B cell (primary cell): ENCODE measurements at regions of chr5 and their contacts with region 1.

Region 1: DNA sequence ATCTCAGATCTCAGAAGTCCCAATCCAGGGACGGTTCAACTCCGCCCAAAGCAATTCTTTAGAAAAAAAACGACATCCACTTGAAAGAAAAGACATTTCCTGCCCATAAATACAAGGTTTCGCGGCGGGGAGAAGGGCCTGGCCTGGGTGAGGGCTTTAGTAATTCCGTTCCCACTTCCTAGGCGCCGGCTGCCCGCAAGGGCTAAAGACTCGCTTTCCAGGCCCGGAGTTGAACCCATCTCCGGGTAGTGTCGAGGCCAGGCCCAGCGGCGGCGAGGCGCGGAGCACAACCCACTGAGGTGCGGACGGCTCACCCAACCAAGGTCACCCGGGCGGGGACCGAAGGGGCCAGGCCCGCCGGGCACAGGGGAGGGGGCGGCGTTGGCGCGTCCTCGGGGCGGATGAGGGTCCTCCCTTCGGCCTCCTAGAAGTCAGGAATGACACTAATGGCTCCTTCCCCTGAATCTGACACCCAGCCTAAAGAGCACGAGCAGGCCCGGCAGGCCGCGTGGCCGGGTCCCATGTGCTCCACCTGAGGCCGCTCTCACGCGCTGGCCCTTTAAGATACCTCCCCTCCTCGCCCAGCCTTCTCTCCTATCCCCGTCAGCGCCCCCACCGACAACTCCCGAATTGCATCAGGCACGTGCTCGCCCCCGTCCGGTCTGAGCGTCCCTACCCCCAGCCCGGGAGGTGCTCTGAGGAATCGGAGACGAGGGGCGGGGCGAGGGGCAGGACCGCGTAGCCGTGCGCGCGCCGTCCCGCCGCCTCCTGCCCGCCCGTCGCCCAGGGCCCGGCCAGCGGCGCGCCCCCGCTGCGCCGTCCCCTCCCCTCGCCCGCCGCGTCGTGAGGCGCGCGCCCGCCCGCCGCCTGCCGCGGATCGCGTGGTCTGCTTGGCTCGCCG is 467 bp upstream of the LARP1 start:
- DNase-seq: peak; percentile 99
- ATAC-seq: peak; percentile 89
- H3K4me3 ChIP-seq: peak overlapping the region in 4 of 5 experiments; percentile 69 to 96 (median 85)
- H3K4me3 Mint-ChIP-seq: peak overlapping the region; percentile 90
- H3K27ac ChIP-seq: peak overlapping the region; percentile 80 to 97
- H3K27ac Mint-ChIP-seq: peak overlapping the region; percentile 91
- H3K4me1 ChIP-seq: peaks cover 28 to 29% of the 10 kb centered on the region in 2 donors
- H3K4me1 Mint-ChIP-seq: peaks cover 43% of the 10 kb centered on the region
- H3K27me3 ChIP-seq: no peaks in the 10 kb centered on the region
- H3K27me3 Mint-ChIP-seq: no peaks in the 10 kb centered on the region
- CTCF ChIP-seq: peak; percentile 45

Region 2: DNA sequence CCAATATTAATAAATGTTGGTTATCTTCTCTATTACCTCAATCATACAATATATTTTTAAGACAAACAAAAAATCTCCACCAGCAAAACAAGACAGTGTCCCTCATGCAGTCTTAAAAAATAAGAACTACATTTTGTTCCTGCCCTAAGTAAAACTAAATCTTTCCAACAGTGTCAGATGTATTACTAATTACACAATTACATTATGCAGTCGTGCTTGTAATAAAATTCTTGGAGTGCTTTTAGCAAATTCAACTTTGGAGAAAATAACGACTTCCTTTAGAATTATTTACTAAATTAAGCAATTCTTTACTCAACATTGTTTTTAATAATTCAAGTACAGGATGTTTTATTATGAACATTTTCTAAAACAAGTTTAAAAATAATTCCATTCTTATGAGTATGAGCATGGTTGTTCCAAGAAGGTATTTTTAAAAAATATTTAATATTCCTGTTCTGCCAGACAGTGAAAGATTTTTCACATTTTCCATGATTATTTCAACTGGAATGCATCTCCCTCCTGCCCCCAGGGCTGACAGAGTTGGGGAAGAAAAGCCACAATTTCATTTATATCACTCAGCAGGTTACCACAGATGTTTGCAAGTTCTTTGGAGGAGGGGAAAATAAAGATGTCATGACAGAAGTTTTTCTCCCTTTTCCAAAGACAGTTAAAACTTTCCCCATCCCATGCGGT is 853.9 kb before region 1 on chr5:
- CTCF ChIA-PET with region 1: no interaction called
- POLR2A ChIA-PET with region 1: no interaction called
- intact Hi-C with region 1: no loop called
- DNase-seq: no peak
- ATAC-seq: no peak
- H3K4me3 ChIP-seq: no peak overlapping the region
- H3K4me3 Mint-ChIP-seq: no peak overlapping the region
- H3K27ac ChIP-seq: no peak overlapping the region
- H3K27ac Mint-ChIP-seq: no peak overlapping the region
- H3K4me1 ChIP-seq: no peaks in the 10 kb centered on the region
- H3K4me1 Mint-ChIP-seq: no peaks in the 10 kb centered on the region
- H3K27me3 ChIP-seq: no peaks in the 10 kb centered on the region
- H3K27me3 Mint-ChIP-seq: peaks cover 7% of the 10 kb centered on the region
- CTCF ChIP-seq: no peak

Region 3: GRCh38 chr5:154445422-154446182 is 309.1 kb before region 1 on chr5 and contains the start of gene SAP30L:
- CTCF ChIA-PET with region 1: no interaction called
- POLR2A ChIA-PET with region 1: no interaction called
- intact Hi-C with region 1: loop called (anchors 2 kb)
- DNase-seq: peak; percentile 97
- ATAC-seq: peak; percentile 96
- H3K4me3 ChIP-seq: peak within 1 kb of the TSS; percentile 78 to 99 (median 90)
- H3K4me3 Mint-ChIP-seq: peak within 1 kb of the TSS; percentile 98
- H3K27ac ChIP-seq: peak within 1 kb of the TSS; percentile 9 to 75
- H3K27ac Mint-ChIP-seq: peak within 1 kb of the TSS; percentile 93
- H3K4me1 ChIP-seq: peaks cover 24 to 32% of the 10 kb centered on the region in 2 donors
- H3K4me1 Mint-ChIP-seq: peaks cover 53% of the 10 kb centered on the region
- H3K27me3 ChIP-seq: no peaks in the 10 kb centered on the region
- H3K27me3 Mint-ChIP-seq: no peaks in the 10 kb centered on the region
- CTCF ChIP-seq: no peak
- total RNA-seq, gene SAP30L: 41.5 and 50.0 TPM in 2 replicates

Region 4: GRCh38 chr5:154683101-154683880 is 71.4 kb before region 1 on chr5:
- CTCF ChIA-PET with region 1: no interaction called
- POLR2A ChIA-PET with region 1: no interaction called
- intact Hi-C with region 1: loop called (anchors 1 kb)
- DNase-seq: no peak
- ATAC-seq: peak; percentile 44
- H3K4me3 ChIP-seq: peak overlapping the region; percentile 21 to 75 (median 57)
- H3K4me3 Mint-ChIP-seq: peak overlapping the region; percentile 78
- H3K27ac ChIP-seq: peak overlapping the region in 1 of 2 donors; percentile 55
- H3K27ac Mint-ChIP-seq: peak overlapping the region; percentile 42
- H3K4me1 ChIP-seq: peaks cover 4 to 17% of the 10 kb centered on the region in 2 donors
- H3K4me1 Mint-ChIP-seq: peaks cover 4% of the 10 kb centered on the region
- H3K27me3 ChIP-seq: peaks cover 0 to 8% (median 2%) of the 10 kb centered on the region in 4 experiments
- H3K27me3 Mint-ChIP-seq: no peaks in the 10 kb centered on the region
- CTCF ChIP-seq: no peak

Region 5: DNA sequence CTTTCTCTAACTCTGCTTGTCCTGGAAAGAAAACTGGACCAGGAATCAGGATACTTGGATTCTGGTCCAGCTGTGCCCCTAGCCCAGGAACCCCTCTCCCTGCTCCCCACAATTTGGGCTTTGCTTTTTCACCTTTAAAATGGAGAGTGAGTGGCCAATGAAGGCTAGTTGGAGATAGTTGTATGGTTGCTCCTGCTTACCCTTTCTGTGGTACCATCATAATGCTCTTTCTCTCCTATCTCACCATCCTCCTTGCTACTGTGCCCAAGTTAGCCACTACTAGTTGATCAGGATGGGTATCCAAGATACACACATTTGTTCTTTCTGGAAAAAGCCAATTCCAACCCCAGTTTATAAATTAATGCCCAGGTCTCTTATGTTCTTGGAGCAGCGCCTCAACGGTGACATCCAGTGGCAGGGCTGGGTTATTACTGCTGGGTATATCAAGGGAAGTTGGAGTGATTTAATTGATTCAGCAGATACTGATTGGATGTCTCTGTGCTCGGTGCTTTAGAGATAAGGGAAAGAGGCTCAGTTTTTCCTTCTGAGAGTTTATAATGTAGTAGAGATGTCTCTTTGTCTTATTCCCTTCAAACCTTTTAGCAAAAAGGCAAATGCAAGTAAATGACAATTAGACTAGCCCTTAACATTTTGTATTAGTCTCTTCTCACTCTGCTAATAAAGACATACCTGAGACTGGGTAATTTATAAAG is 57.1 kb after region 1 on chr5:
- CTCF ChIA-PET with region 1: interaction called, 3 read pairs
- POLR2A ChIA-PET with region 1: no interaction called
- intact Hi-C with region 1: loop called (anchors 2 kb)
- DNase-seq: peak; percentile 75
- ATAC-seq: peak; percentile 82
- H3K4me3 ChIP-seq: no peak overlapping the region
- H3K4me3 Mint-ChIP-seq: no peak overlapping the region
- H3K27ac ChIP-seq: peak overlapping the region in 1 of 2 donors; percentile 41
- H3K27ac Mint-ChIP-seq: peak overlapping the region; percentile 50
- H3K4me1 ChIP-seq: peaks cover 21 to 25% of the 10 kb centered on the region in 2 donors
- H3K4me1 Mint-ChIP-seq: peaks cover 20% of the 10 kb centered on the region
- H3K27me3 ChIP-seq: no peaks in the 10 kb centered on the region
- H3K27me3 Mint-ChIP-seq: no peaks in the 10 kb centered on the region
- CTCF ChIP-seq: peak; percentile 97